ENCODE measurements at regions of chr1 and their contacts with region 1.

Region 1: GRCh38 chr1:180154325-180155181 is at the start of gene QSOX1:
- DNase-seq: peak; percentile 70 to 88
- H3K4me3 ChIP-seq: peak within 1 kb of the TSS; percentile 82
- H3K27ac ChIP-seq: peak within 1 kb of the TSS; percentile 73
- H3K4me1 ChIP-seq: peaks cover 61% of the 10 kb centered on the region
- H3K27me3 ChIP-seq: no peaks in the 10 kb centered on the region
- CTCF ChIP-seq: no peak
- total RNA-seq, gene QSOX1: 226 and 263 TPM in 2 replicates

Region 2: DNA sequence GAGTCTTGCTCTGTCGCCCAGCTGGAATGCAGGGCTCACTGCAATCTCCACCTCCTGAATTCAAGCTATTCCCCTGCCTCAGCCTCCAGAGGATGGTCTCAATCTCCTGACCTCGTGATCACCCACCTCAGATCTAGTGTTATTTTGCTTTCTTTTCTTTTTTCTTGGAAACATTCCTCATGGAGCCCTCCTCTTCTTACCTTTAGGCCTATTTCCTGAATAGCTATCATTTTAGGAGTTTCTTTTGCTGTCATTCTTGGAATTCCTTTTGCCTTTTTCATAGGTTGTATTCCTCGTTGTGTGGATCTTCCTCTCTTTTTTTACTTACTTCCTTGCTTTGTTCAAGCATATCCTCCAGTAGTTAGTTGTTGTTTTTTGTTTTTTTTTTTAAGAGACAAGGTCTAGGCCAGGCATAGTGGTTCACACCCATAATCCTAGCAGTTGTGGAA is 1886.9 kb before region 1 on chr1:
- CTCF ChIA-PET with region 1: no interaction called
- POLR2A ChIA-PET with region 1: interaction called, 41 read pairs
- intact Hi-C with region 1: no loop called
- DNase-seq: peak; percentile 66 to 90
- H3K4me3 ChIP-seq: no peak overlapping the region
- H3K27ac ChIP-seq: peak overlapping the region; percentile 78
- H3K4me1 ChIP-seq: peaks cover 29% of the 10 kb centered on the region
- H3K27me3 ChIP-seq: no peaks in the 10 kb centered on the region
- CTCF ChIP-seq: no peak

Region 3: DNA sequence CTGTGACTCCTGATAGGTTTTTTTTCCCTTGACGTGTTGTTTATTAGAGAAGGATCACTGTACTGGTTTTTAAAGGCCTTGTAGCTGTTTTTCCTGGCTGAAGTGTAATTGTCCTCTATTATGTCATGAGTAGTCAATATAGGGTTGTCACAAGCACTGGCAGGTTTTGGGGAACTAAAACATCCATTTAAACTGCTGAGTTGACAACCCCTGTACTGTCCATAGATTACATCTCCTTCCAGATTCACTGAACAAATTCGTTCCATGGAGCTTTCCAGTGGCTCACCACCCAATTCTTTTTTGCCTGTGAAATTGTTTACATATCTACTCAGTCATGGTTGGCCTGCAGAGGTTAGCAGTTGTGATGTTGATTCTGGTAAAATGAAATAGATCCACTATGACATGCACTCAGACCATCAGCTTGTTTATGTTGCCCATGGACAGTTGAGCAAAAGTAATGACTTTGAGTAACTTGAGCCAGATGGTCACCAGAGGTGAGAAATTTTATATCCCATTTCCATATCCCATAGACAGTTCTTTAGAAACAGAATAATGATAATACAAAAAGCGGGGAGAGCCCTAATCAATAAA is 59.8 kb before region 1 on chr1:
- CTCF ChIA-PET with region 1: no interaction called
- POLR2A ChIA-PET with region 1: no interaction called
- intact Hi-C with region 1: loop called (anchors 5 kb)
- DNase-seq: no peak
- H3K4me3 ChIP-seq: no peak overlapping the region
- H3K27ac ChIP-seq: no peak overlapping the region
- H3K4me1 ChIP-seq: peaks cover 25% of the 10 kb centered on the region
- H3K27me3 ChIP-seq: no peaks in the 10 kb centered on the region
- CTCF ChIP-seq: no peak

Region 4: GRCh38 chr1:180131510-180131909 is 23.0 kb before region 1 on chr1:
- CTCF ChIA-PET with region 1: no interaction called
- POLR2A ChIA-PET with region 1: interaction called, 4 read pairs
- intact Hi-C with region 1: loop called (anchors 2 kb)
- DNase-seq: peak in 1 of 2 experiments; percentile 73
- H3K4me3 ChIP-seq: no peak overlapping the region
- H3K27ac ChIP-seq: peak overlapping the region; percentile 41
- H3K4me1 ChIP-seq: peaks cover 33% of the 10 kb centered on the region
- H3K27me3 ChIP-seq: no peaks in the 10 kb centered on the region
- CTCF ChIP-seq: no peak

Region 5: GRCh38 chr1:180631766-180632325 is 477.3 kb after region 1 on chr1 and contains the start of gene XPR1:
- CTCF ChIA-PET with region 1: interaction called, 10 read pairs
- POLR2A ChIA-PET with region 1: no interaction called
- intact Hi-C with region 1: no loop called
- DNase-seq: peak; percentile 92 to 96
- H3K4me3 ChIP-seq: peak within 1 kb of the TSS; percentile 73
- H3K27ac ChIP-seq: no peak within 1 kb of the TSS
- H3K4me1 ChIP-seq: peaks cover 14% of the 10 kb centered on the region
- H3K27me3 ChIP-seq: no peaks in the 10 kb centered on the region
- CTCF ChIP-seq: no peak
- total RNA-seq, gene XPR1: 10.4 and 16.8 TPM in 2 replicates

Measured in PC-9 (cell line).